Activated CD8-positive, alpha-beta memory T cell treated with anti-CD3 and anti-CD28 coated beads, Interleukin-2, amount 10 ng/mL, durations not matched to agents 7 days and 5 days (primary cell): ENCODE measurements at regions of chr1 and their contacts with region 1.

Region 1: GRCh38 chr1:51296383-51297357 is 33.7 kb downstream of the TTC39A start:
- DNase-seq: peak; percentile 84
- ATAC-seq: peak; percentile 76
- H3K4me3 Mint-ChIP-seq: peak overlapping the region; percentile 58
- H3K27ac Mint-ChIP-seq: peak overlapping the region; percentile 71
- H3K4me1 Mint-ChIP-seq: peaks cover 37% of the 10 kb centered on the region
- H3K27me3 Mint-ChIP-seq: peaks cover 3% of the 10 kb centered on the region

Region 2: DNA sequence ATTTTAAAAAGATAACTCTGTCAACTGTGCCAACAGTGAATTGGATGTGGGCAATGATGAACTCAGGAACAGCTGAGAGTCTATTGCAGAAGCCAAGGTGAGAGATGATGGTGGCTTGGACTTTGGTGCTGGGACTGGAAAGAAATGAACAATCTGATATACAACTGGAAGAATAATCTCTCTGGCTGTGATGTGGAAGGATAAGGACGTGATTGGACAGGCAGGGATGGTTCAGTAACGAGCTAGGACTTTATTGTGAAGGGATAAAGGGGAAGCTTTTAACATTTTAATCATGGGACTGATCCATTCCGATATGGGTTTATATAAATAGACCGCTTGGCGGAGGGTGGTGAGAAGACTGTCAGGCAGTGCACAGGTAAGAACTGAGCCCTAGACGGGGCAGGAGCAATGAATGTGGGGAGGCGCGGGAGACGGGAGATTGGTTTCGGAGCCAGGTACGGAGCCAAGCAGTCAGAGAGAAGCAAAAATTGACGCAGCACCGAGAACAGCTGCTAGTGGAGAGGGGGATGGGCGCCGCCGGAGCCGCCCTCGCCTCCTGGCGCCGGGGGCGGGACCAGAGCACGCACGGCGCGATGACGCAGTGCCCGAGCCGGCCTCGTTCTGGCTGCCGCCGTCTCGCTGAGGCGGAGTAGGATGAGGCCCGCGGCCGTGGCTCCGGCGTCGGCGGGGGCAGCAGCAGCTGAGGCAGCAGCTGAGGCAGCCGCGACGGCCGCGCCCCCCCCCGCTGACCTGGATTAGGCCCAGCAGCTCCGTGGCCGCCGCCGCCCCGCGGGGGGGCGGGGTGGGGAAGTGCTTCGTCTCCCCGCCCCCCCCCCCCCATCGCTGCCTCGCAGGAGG is 60.8 kb before region 1 on chr1 and contains the start of gene RNF11:
- CTCF ChIA-PET with region 1: interaction called, 21 read pairs
- DNase-seq: peak; percentile 93
- ATAC-seq: peak; percentile 97
- H3K4me3 Mint-ChIP-seq: peak within 1 kb of the TSS; percentile 85
- H3K27ac Mint-ChIP-seq: peak within 1 kb of the TSS; percentile 84
- H3K4me1 Mint-ChIP-seq: peaks cover 29% of the 10 kb centered on the region
- H3K27me3 Mint-ChIP-seq: no peaks in the 10 kb centered on the region
- total RNA-seq, gene RNF11: 26.4 to 35.5 TPM

Region 3: DNA sequence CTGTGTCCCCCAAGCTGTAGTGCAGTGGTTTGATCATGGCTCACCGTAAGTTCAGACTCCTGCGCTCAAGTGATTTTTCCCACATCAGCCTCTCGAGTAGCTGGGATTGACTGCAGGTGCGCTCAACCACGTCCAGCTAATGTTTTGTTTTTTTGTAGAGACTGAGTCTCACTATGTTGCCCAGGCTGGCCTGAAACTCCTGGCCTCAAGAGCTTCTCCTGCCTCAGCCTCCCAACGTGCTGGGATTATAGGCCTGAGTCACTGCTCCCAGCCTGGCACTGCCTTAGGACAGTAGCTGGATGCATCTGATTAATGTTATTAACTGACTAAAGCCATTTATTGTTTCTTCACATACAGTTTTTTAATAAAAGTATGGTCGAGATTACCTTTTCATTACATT is 20.4 kb before region 1 on chr1:
- CTCF ChIA-PET with region 1: interaction called, 12 read pairs
- DNase-seq: no peak
- ATAC-seq: no peak
- H3K4me3 Mint-ChIP-seq: no peak overlapping the region
- H3K27ac Mint-ChIP-seq: no peak overlapping the region
- H3K4me1 Mint-ChIP-seq: peaks cover 10% of the 10 kb centered on the region
- H3K27me3 Mint-ChIP-seq: no peaks in the 10 kb centered on the region

Region 4: GRCh38 chr1:51331206-51332100 is 34.8 kb after region 1 on chr1:
- CTCF ChIA-PET with region 1: interaction called, 10 read pairs
- DNase-seq: no peak
- ATAC-seq: peak; percentile 24
- H3K4me3 Mint-ChIP-seq: peak overlapping the region; percentile 34
- H3K27ac Mint-ChIP-seq: no peak overlapping the region
- H3K4me1 Mint-ChIP-seq: peaks cover 6% of the 10 kb centered on the region
- H3K27me3 Mint-ChIP-seq: peaks cover 37% of the 10 kb centered on the region

Region 5: DNA sequence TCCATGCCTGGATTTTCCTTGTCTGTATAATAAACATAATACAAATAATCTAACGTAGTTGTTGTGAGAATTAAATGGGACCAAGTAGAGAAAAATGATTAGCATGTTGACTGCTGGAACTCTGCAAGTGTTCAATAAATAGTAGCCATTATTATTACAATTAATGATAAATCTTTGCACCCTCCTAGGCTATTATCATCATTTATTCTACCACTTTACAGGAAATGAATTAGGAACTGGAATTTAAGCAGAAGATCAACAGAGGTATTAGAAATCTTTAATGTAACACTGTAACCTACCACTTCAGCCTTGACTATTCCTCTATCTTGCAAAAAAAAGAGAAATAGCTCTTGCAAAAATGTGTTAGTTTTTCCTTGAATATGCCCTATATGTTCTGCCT is 95.6 kb after region 1 on chr1:
- CTCF ChIA-PET with region 1: no interaction called
- DNase-seq: no peak
- ATAC-seq: no peak
- H3K4me3 Mint-ChIP-seq: no peak overlapping the region
- H3K27ac Mint-ChIP-seq: no peak overlapping the region
- H3K4me1 Mint-ChIP-seq: no peaks in the 10 kb centered on the region
- H3K27me3 Mint-ChIP-seq: no peaks in the 10 kb centered on the region

Region 6: DNA sequence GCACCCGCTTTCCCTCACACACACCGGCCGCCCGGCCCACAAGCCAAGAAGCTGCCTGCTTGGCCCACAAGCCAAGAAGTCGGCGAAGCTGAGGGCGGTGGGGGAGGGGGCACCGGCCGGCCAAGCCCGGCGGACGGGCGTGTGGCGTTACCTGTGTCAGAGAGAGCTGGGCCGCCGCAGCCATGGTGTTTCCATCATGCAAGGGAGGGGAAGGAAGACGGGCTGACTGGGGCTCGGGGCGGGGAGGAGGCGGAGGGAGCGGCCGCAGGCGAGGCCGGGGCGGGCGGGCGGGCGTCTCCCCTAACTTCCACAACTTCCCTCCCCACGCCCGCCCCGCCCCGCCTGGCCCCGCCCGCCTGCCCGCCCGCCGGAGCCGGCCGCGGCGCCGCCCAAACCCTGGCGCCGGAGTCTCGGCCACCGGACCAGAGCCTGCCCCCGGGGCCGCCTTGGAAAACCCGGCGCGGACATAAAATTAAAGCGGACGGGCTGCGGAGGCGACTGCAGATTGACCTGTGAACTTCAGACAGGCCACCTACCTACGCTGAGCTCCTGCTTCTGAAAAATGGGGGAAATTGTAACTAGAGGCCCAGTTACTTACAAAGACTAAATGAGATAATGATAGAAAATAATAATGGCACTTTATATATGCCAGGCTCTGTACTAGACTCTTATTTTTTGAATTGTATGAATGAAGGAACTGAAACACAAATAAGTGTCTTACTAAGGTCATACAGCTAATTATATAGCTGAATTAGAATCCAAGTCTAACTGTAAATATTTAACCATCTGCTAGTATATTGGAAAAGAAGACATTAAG is 222.6 kb after region 1 on chr1 and contains the start of gene EPS15:
- CTCF ChIA-PET with region 1: no interaction called
- DNase-seq: peak; percentile 91
- ATAC-seq: peak; percentile 79
- H3K4me3 Mint-ChIP-seq: peak within 1 kb of the TSS; percentile 85
- H3K27ac Mint-ChIP-seq: peak within 1 kb of the TSS; percentile 87
- H3K4me1 Mint-ChIP-seq: peaks cover 49% of the 10 kb centered on the region
- H3K27me3 Mint-ChIP-seq: no peaks in the 10 kb centered on the region
- total RNA-seq, gene EPS15: 71.6 to 80.0 TPM

Region 7: DNA sequence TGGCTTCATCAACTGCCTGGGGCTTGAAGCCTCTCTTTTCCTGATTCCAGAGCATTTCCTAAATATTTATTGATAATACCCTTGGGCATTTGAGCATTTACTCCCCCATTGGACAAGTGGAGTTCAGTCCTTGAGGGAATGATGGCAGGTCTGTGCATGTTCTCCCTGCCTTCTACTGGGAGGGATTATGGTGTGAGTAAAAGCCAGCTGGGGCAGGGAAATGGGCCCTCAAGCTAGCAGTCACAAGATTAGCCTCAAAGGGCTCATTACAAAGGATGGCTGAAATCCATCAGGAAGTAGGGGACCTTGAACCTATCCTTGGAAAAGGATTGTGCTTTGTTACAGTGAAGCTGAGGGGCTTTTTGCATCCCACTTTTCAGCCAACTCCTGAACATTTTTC is 296.0 kb after region 1 on chr1:
- CTCF ChIA-PET with region 1: no interaction called
- DNase-seq: no peak
- ATAC-seq: no peak
- H3K4me3 Mint-ChIP-seq: no peak overlapping the region
- H3K27ac Mint-ChIP-seq: no peak overlapping the region
- H3K4me1 Mint-ChIP-seq: no peaks in the 10 kb centered on the region
- H3K27me3 Mint-ChIP-seq: peaks cover 4% of the 10 kb centered on the region